K562 (cell line): ENCODE measurements at regions of chr10 and their contacts with region 1.

Region 1: GRCh38 chr10:22988581-22989360 is 60.9 kb downstream of the ARMC3 start:
- DNase-seq: peak; percentile 63 to 81 (median 65)
- ATAC-seq: peak; percentile 86
- H3K4me3 ChIP-seq: no peak overlapping the region
- H3K27ac ChIP-seq: no peak overlapping the region
- H3K4me1 ChIP-seq: peaks cover 0 to 3% of the 10 kb centered on the region in 2 experiments; a peak in 1 of 5 replicates
- H3K27me3 ChIP-seq: no peaks in the 10 kb centered on the region
- CTCF ChIP-seq: peak; percentile 69 to 93 (median 83)
- EP300 ChIP-seq: peak; percentile 56
- POLR2A ChIP-seq: no peak
- RAD21 ChIP-seq: peak; percentile 93 to 95

Region 2: DNA sequence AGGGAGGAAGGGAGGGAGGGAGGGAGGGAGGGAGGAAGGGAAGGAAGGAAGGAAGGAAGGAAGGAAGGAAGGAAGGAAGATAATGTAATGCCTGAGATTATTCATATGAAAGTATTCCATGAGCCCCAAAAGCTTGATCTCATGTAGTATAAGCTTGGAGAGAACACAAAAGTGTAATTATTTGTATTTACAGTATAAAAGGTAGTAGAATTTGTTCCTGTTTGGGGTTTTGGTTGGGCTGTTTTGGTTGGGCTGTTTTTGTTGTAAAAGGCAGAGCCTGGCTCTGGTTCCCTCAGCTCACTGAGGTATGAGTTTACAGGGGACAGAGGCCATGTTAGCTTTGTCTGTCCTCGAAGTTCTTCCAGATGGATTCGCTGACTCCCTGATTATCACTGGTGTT is 725.7 kb before region 1 on chr10:
- CTCF ChIA-PET with region 1: no interaction called
- POLR2A ChIA-PET with region 1: no interaction called
- in situ Hi-C with region 1: no loop called
- intact Hi-C with region 1: loop called (anchors 5 kb)
- DNase-seq: no peak
- ATAC-seq: no peak
- H3K4me3 ChIP-seq: no peak overlapping the region
- H3K27ac ChIP-seq: no peak overlapping the region
- H3K4me1 ChIP-seq: no peaks in the 10 kb centered on the region
- H3K27me3 ChIP-seq: no peaks in the 10 kb centered on the region
- CTCF ChIP-seq: no peak
- EP300 ChIP-seq: no peak
- POLR2A ChIP-seq: no peak
- RAD21 ChIP-seq: no peak

Region 3: GRCh38 chr10:22518167-22518724 is 470.5 kb before region 1 on chr10:
- CTCF ChIA-PET with region 1: no interaction called
- POLR2A ChIA-PET with region 1: no interaction called
- in situ Hi-C with region 1: no loop called
- intact Hi-C with region 1: no loop called
- DNase-seq: no peak
- ATAC-seq: no peak
- H3K4me3 ChIP-seq: no peak overlapping the region
- H3K27ac ChIP-seq: no peak overlapping the region
- H3K4me1 ChIP-seq: peaks cover 2 to 12% of the 10 kb centered on the region in 2 experiments; a peak in 4 of 5 replicates
- H3K27me3 ChIP-seq: no peaks in the 10 kb centered on the region
- CTCF ChIP-seq: no peak
- EP300 ChIP-seq: no peak
- POLR2A ChIP-seq: no peak
- RAD21 ChIP-seq: no peak

Region 4: GRCh38 chr10:22573820-22574569 is 414.8 kb before region 1 on chr10:
- CTCF ChIA-PET with region 1: interaction called, 5 read pairs
- POLR2A ChIA-PET with region 1: no interaction called
- in situ Hi-C with region 1: no loop called
- intact Hi-C with region 1: loop called (anchors 5 kb)
- DNase-seq: peak; percentile 23 to 43 (median 28)
- ATAC-seq: peak; percentile 69
- H3K4me3 ChIP-seq: no peak overlapping the region
- H3K27ac ChIP-seq: no peak overlapping the region
- H3K4me1 ChIP-seq: no peaks in the 10 kb centered on the region
- H3K27me3 ChIP-seq: no peaks in the 10 kb centered on the region
- CTCF ChIP-seq: peak; percentile 46 to 62 (median 56)
- EP300 ChIP-seq: no peak
- POLR2A ChIP-seq: no peak
- RAD21 ChIP-seq: peak; percentile 47 to 81

Region 5: DNA sequence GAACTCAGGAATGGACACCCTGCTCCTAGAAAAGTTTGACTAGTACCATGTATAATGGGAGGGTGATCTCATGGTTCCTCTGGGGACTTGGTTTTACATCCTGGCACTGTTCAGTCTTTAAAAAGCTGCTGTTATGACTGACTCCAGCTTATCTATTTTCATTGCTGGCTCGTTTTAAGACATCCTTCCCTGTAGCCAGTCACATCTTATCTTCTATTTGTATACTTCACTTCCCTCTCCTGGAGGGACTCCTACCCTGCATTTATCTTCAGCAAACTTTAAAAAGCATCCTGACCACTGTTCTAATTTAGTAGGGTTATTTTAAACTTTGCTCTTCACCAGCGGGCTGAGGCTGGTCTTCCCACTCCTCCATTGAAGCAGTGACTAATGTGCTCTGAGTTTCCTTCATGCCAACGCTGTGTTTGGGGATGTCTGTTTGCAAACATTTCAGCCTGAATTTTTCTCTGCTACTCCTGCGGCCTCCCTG is 133.8 kb before region 1 on chr10:
- CTCF ChIA-PET with region 1: no interaction called
- POLR2A ChIA-PET with region 1: no interaction called
- in situ Hi-C with region 1: no loop called
- intact Hi-C with region 1: loop called (anchors 2 kb)
- DNase-seq: peak in 2 of 4 experiments; percentile 61 to 65
- ATAC-seq: peak; percentile 93
- H3K4me3 ChIP-seq: no peak overlapping the region
- H3K27ac ChIP-seq: no peak overlapping the region
- H3K4me1 ChIP-seq: peaks cover 0 to 25% of the 10 kb centered on the region in 2 experiments; a peak in 3 of 5 replicates
- H3K27me3 ChIP-seq: no peaks in the 10 kb centered on the region
- CTCF ChIP-seq: peak; percentile 34 to 73 (median 43); a peak in 4 of 6 replicates
- EP300 ChIP-seq: peak; percentile 29
- POLR2A ChIP-seq: no peak
- RAD21 ChIP-seq: peak; percentile 85 to 88

Region 6: GRCh38 chr10:23067939-23068775 is 79.4 kb after region 1 on chr10:
- CTCF ChIA-PET with region 1: interaction called, 3 read pairs
- POLR2A ChIA-PET with region 1: no interaction called
- in situ Hi-C with region 1: loop called (anchors 5 kb)
- intact Hi-C with region 1: loop called (anchors 1 kb)
- DNase-seq: peak; percentile 73 to 92 (median 76)
- ATAC-seq: peak; percentile 94
- H3K4me3 ChIP-seq: no peak overlapping the region
- H3K27ac ChIP-seq: no peak overlapping the region
- H3K4me1 ChIP-seq: peaks cover 11 to 20% of the 10 kb centered on the region in 2 experiments; a peak in 4 of 5 replicates
- H3K27me3 ChIP-seq: no peaks in the 10 kb centered on the region
- CTCF ChIP-seq: peak; percentile 77 to 93 (median 88)
- EP300 ChIP-seq: no peak
- POLR2A ChIP-seq: no peak
- RAD21 ChIP-seq: peak; percentile 79 to 88